ENCODE measurements at regions of chr1 and their contacts with region 1.

Region 1: GRCh38 chr1:241551759-241552638 is 19.8 kb downstream of the KMO start:
- DNase-seq: peak; percentile 46
- ATAC-seq: peak; percentile 89
- H3K4me3 Mint-ChIP-seq: peak overlapping the region; percentile 83
- H3K27ac Mint-ChIP-seq: peak overlapping the region; percentile 100
- H3K4me1 Mint-ChIP-seq: peaks cover 62% of the 10 kb centered on the region
- H3K27me3 Mint-ChIP-seq: peaks cover 2% of the 10 kb centered on the region
- CTCF ChIP-seq: no peak

Region 2: GRCh38 chr1:241029580-241030208 is 522.3 kb before region 1 on chr1:
- CTCF ChIA-PET with region 1: no interaction called
- POLR2A ChIA-PET with region 1: no interaction called
- intact Hi-C with region 1: no loop called
- DNase-seq: no peak
- ATAC-seq: no peak
- H3K4me3 Mint-ChIP-seq: no peak overlapping the region
- H3K27ac Mint-ChIP-seq: no peak overlapping the region
- H3K4me1 Mint-ChIP-seq: no peaks in the 10 kb centered on the region
- H3K27me3 Mint-ChIP-seq: no peaks in the 10 kb centered on the region
- CTCF ChIP-seq: no peak

Region 3: DNA sequence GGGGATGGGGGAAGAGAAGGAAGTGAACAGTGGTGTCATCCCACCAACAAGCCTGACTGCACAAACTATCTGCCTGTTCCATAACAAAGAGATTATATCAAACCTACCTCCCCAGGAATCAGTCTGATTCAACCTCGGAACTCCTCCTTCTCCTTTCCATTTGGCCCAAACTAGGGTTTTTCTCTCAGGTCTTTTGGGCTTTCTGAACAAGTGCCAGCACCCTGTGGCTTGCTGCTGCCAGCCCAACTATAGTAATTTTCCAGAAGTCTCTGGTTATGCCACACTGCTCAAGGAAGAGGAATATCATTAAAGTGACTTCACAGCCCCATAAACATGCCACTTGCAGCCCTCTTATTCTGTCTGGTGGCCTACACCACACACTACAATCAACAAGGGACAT is 265.5 kb before region 1 on chr1:
- CTCF ChIA-PET with region 1: no interaction called
- POLR2A ChIA-PET with region 1: no interaction called
- intact Hi-C with region 1: no loop called
- DNase-seq: no peak
- ATAC-seq: no peak
- H3K4me3 Mint-ChIP-seq: no peak overlapping the region
- H3K27ac Mint-ChIP-seq: no peak overlapping the region
- H3K4me1 Mint-ChIP-seq: no peaks in the 10 kb centered on the region
- H3K27me3 Mint-ChIP-seq: no peaks in the 10 kb centered on the region
- CTCF ChIP-seq: no peak

Region 4: DNA sequence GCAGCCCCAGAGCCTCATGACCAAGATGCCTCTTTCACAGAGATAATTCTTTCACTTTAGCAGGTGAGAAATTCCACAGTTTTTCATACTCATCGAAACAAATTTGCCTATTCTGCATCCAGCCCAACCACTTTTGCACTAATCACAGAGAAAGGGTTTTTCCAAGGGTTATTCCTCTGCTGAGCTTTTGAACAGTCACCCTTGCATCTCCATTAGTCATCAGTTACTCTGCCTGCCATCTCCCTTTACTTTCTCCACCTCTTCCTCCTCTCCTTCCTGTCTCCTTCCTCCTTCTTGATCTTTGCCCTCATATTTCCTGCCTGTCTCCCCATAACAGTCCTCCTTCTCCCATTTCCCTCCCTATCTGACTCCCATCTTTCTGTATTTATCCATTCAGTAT is 76.3 kb before region 1 on chr1:
- CTCF ChIA-PET with region 1: no interaction called
- POLR2A ChIA-PET with region 1: no interaction called
- intact Hi-C with region 1: no loop called
- DNase-seq: no peak
- ATAC-seq: no peak
- H3K4me3 Mint-ChIP-seq: no peak overlapping the region
- H3K27ac Mint-ChIP-seq: no peak overlapping the region
- H3K4me1 Mint-ChIP-seq: peaks cover 9% of the 10 kb centered on the region
- H3K27me3 Mint-ChIP-seq: peaks cover 9% of the 10 kb centered on the region
- CTCF ChIP-seq: no peak

Region 5: DNA sequence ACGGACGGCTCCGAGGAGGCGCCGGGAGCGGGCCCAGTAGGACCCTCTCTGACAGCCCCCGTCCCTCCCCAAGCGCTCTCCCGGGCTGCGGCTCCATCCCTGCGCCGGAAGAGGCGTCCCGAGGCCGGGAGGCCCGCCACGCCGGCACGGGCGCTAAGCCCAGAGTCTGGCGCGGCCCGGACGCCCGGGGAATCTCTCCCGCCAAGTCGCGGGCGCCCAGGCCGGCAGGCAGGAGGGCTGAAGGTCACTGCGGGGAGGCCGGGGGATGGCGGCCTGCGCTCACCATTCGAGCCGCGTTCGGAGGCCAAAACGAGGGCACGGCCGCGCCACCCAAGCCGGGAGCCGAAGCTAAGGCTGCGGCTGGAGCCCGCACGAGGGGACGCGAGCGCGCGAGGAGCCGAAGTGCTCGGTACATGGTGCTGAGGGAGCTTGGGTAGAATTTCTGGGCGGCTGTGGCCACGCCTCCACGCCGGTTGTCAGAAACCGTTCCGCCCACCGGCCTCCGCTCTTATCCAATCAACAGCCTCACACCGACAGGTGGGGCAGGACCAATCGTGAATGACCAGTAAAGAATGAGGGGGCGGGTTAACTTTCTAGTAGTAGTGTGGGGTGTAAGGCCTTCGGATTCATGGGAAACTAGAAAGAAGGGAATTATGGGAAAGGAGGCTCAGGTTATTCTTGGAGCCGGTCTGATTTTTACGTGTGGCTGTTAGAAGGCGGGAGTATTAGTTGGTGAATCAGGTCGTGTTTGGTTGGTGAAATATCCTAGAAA is 32.5 kb before region 1 on chr1 and contains the start of gene FH:
- CTCF ChIA-PET with region 1: no interaction called
- POLR2A ChIA-PET with region 1: interaction called, 9 read pairs
- intact Hi-C with region 1: loop called (anchors 1 kb)
- DNase-seq: peak; percentile 87
- ATAC-seq: peak; percentile 98
- H3K4me3 Mint-ChIP-seq: peak within 1 kb of the TSS; percentile 91
- H3K27ac Mint-ChIP-seq: peak within 1 kb of the TSS; percentile 72
- H3K4me1 Mint-ChIP-seq: peaks cover 21% of the 10 kb centered on the region
- H3K27me3 Mint-ChIP-seq: no peaks in the 10 kb centered on the region
- CTCF ChIP-seq: no peak
- total RNA-seq, gene FH: 56.0 and 58.3 TPM in 2 replicates

Region 6: DNA sequence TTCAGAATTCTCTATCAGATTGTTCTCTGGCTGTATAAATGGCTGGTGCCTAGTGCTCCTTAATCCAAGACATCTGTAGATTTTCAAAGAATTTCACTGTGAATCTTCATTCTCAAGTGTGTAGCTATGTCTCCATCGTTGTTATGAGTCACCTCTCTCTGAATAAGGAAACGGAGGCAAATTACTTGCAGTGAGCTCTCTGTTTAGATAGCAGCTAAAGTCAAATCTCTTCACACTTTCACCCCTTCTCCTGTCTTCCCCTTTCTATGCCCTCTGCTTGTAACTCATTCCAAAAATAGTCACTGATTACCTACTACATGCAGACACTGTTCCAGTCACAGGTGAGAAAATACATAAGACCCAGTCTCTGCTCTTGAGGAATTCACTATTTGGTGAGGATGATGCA is 48.5 kb after region 1 on chr1:
- CTCF ChIA-PET with region 1: interaction called, 7 read pairs
- POLR2A ChIA-PET with region 1: interaction called, 11 read pairs
- intact Hi-C with region 1: loop called (anchors 1 kb)
- DNase-seq: no peak
- ATAC-seq: peak; percentile 64
- H3K4me3 Mint-ChIP-seq: peak overlapping the region; percentile 9
- H3K27ac Mint-ChIP-seq: peak overlapping the region; percentile 78
- H3K4me1 Mint-ChIP-seq: peaks cover 74% of the 10 kb centered on the region
- H3K27me3 Mint-ChIP-seq: no peaks in the 10 kb centered on the region
- CTCF ChIP-seq: no peak

Region 7: DNA sequence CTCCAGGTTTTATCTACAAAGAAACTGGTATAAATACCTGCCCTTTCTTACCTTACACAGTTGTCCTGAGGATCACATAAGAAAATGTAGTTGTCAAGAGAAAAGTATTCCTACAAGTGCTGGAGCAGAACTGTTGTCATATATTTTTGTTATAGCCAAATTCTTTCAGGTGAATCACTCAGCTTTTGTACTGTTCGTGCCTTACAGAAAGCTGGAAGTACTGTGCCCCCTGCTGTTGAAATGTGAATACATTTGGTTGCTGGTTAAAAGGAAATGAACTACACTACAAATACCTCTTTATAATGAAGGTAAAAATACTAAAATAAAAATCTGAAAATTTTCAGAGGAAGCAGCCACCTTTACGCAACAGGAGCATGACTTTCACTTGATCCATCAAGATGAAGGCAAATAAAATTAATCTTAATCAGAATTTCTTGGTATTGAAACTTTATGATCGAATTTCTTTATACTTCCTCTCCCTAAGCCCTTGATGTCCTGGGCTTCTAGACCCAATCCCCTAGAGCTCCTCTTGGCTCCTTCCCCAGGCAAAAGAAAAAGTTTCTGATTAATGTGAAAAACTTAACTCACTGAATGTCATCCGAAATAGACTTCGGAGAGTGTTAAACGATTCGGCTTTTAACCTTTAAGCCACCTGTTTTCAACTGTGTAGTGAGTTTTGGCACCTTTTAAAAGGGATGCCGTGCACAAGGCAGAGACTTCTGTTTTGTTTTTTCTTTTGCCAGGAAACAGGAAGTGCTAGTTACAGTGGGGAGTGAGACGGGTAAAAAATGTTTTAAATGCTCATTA is 75.7 kb after region 1 on chr1:
- CTCF ChIA-PET with region 1: interaction called, 3 read pairs
- POLR2A ChIA-PET with region 1: interaction called, 4 read pairs
- intact Hi-C with region 1: loop called (anchors 1 kb)
- DNase-seq: no peak
- ATAC-seq: peak; percentile 83
- H3K4me3 Mint-ChIP-seq: peak overlapping the region; percentile 66
- H3K27ac Mint-ChIP-seq: peak overlapping the region; percentile 86
- H3K4me1 Mint-ChIP-seq: peaks cover 48% of the 10 kb centered on the region
- H3K27me3 Mint-ChIP-seq: no peaks in the 10 kb centered on the region
- CTCF ChIP-seq: peak; percentile 17

Measured in activated B cell treated with CpG ODN at 0.5 μM for 24 hours (primary cell).